ENCODE measurements at regions of chr19 and their contacts with region 1.

Region 1: GRCh38 chr19:43555185-43555770 is 20.0 kb downstream of the XRCC1 start:
- DNase-seq: peak; percentile 55
- ATAC-seq: peak; percentile 98
- H3K4me3 Mint-ChIP-seq: no peak overlapping the region
- H3K27ac Mint-ChIP-seq: no peak overlapping the region
- H3K4me1 Mint-ChIP-seq: peaks cover 13% of the 10 kb centered on the region
- H3K27me3 Mint-ChIP-seq: no peaks in the 10 kb centered on the region
- CTCF ChIP-seq: no peak

Region 2: GRCh38 chr19:43519436-43520088 is 35.7 kb before region 1 on chr19:
- CTCF ChIA-PET with region 1: interaction called, 15 read pairs
- POLR2A ChIA-PET with region 1: no interaction called
- intact Hi-C with region 1: no loop called
- DNase-seq: peak; percentile 57
- ATAC-seq: peak; percentile 51
- H3K4me3 Mint-ChIP-seq: peak overlapping the region; percentile 44
- H3K27ac Mint-ChIP-seq: peak overlapping the region; percentile 15
- H3K4me1 Mint-ChIP-seq: peaks cover 18% of the 10 kb centered on the region
- H3K27me3 Mint-ChIP-seq: no peaks in the 10 kb centered on the region
- CTCF ChIP-seq: peak; percentile 62

Region 3: DNA sequence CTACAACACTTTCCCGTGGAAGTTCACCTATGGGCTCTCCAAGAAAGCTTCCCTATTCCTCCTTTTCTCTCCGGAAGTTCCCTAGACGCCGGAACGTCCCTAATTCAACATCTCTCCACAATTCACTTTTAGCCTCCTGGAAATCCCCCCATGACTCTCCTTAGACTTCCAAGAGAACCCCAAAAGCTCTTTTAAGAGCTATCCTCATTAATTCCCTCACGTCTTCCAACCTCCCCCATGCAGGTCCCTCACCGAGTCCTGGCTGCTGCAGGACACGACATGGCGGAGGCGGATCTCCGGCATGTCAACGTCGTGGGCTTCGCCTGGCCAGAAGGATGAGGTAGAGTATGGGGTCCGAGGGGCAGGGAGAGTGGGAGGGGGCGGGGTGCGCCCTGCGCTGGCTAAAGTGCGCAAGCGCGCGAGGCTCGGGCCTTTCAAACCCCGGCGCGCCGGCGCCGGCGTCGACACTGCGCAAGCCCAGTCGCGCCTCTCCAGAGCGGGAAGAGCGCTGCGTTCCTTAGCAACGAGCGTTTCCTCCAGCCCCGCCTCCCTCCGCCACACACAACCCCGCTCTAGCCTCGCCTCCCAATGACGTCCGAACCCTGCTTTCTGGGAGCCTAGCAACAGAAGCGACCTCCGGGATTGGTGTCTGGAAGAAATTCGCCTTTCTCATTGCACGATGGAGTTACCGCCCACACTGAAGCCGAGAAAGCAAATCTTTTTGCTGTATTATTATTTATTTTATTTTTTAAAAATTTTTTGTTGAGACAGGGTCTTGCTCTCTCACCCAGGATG is 20.1 kb after region 1 on chr19 and contains the starts of genes PINLYP and XRCC1:
- CTCF ChIA-PET with region 1: interaction called, 17 read pairs
- POLR2A ChIA-PET with region 1: interaction called, 5 read pairs
- intact Hi-C with region 1: no loop called
- DNase-seq: peak; percentile 87
- ATAC-seq: peak; percentile 97
- H3K4me3 Mint-ChIP-seq: peak within 1 kb of the TSS; percentile 96
- H3K27ac Mint-ChIP-seq: peak within 1 kb of the TSS; percentile 92
- H3K4me1 Mint-ChIP-seq: peaks cover 44% of the 10 kb centered on the region
- H3K27me3 Mint-ChIP-seq: no peaks in the 10 kb centered on the region
- CTCF ChIP-seq: no peak
- total RNA-seq, gene PINLYP: 1.9 and 2.1 TPM in 2 replicates
- total RNA-seq, gene XRCC1: 31.9 and 34.5 TPM in 2 replicates

Region 4: DNA sequence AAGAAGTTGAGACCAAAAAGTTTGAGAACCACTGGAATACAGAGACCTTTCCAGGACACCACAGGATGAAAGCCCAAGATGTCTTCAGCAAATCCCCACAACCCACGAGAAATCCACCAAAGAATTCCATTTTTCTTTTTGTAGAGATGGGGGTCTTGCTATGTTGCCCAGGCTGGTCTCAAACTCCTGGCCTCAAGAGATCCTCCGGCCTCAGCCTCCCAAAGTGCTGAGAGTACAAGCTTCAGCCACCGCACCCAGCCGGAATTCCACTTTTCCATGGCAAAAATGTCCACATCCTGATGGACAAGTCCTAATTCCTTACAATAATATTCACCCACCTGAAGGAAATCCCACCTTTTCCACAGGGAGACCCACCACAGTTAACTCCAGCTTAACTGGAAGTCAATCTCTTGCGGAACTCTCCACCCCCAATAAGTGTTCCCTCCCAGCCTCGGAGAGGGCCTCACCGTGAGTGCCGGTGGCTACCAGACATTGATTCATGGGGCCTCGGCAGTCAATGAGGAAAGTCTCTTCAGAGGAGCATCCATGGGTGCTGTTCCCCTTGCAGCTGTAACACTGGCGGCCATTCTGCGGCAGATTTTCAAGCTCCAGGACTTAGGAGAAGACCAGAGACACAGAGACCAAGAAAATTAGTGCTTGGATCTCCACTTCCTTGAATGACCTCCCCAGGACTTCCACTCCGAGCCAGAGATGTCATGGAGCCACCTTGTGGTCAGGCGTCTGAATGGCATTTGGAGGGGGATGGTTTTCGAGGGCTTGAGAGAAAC is 96.7 kb after region 1 on chr19:
- CTCF ChIA-PET with region 1: interaction called, 7 read pairs
- POLR2A ChIA-PET with region 1: no interaction called
- intact Hi-C with region 1: loop called (anchors 1 kb)
- DNase-seq: no peak
- ATAC-seq: peak; percentile 57
- H3K4me3 Mint-ChIP-seq: no peak overlapping the region
- H3K27ac Mint-ChIP-seq: no peak overlapping the region
- H3K4me1 Mint-ChIP-seq: no peaks in the 10 kb centered on the region
- H3K27me3 Mint-ChIP-seq: peaks cover 3% of the 10 kb centered on the region
- CTCF ChIP-seq: peak; percentile 32

Region 5: DNA sequence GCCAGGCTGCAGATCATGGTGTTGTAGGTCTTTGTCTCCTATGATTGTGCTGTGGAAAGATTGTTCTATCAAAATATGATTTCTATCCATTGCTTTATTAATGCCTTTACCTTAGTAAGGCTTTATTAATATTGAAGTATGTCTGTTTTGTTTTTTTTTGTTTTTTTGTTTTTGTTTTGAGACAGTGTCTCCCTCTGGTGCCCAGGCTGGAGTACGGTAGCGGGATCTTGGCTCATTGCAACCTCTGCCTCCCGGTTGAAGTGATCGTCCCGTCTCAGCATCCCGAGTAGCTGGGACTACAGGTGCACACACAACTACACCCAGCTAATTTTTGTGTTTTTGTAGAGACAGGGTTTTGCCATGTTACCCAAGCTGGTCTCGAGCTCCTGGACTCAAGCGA is 168.3 kb after region 1 on chr19:
- CTCF ChIA-PET with region 1: no interaction called
- POLR2A ChIA-PET with region 1: no interaction called
- intact Hi-C with region 1: no loop called
- DNase-seq: no peak
- ATAC-seq: no peak
- H3K4me3 Mint-ChIP-seq: no peak overlapping the region
- H3K27ac Mint-ChIP-seq: no peak overlapping the region
- H3K4me1 Mint-ChIP-seq: peaks cover 40% of the 10 kb centered on the region
- H3K27me3 Mint-ChIP-seq: no peaks in the 10 kb centered on the region
- CTCF ChIP-seq: no peak

Region 6: GRCh38 chr19:43809762-43810696 is 254.8 kb after region 1 on chr19:
- CTCF ChIA-PET with region 1: interaction called, 8 read pairs
- POLR2A ChIA-PET with region 1: no interaction called
- intact Hi-C with region 1: loop called (anchors 1 kb)
- DNase-seq: no peak
- ATAC-seq: peak; percentile 49
- H3K4me3 Mint-ChIP-seq: no peak overlapping the region
- H3K27ac Mint-ChIP-seq: no peak overlapping the region
- H3K4me1 Mint-ChIP-seq: no peaks in the 10 kb centered on the region
- H3K27me3 Mint-ChIP-seq: peaks cover 14% of the 10 kb centered on the region
- CTCF ChIP-seq: no peak